Posterior cingulate gyrus (tissue), 11 donors: ENCODE measurements at regions of chr19 and their contacts with region 1.

Region 1: GRCh38 chr19:39846176-39846677 is at the start of gene FBL:
- DNase-seq: peak; percentile 92 to 99 (median 95)

Region 2: GRCh38 chr19:39539519-39540332 is 306.5 kb before region 1 on chr19 and contains the start of gene EID2:
- intact Hi-C with region 1: loop called (anchors 10 kb)
- DNase-seq: peak; percentile 93 to 99 (median 95)

Region 3: DNA sequence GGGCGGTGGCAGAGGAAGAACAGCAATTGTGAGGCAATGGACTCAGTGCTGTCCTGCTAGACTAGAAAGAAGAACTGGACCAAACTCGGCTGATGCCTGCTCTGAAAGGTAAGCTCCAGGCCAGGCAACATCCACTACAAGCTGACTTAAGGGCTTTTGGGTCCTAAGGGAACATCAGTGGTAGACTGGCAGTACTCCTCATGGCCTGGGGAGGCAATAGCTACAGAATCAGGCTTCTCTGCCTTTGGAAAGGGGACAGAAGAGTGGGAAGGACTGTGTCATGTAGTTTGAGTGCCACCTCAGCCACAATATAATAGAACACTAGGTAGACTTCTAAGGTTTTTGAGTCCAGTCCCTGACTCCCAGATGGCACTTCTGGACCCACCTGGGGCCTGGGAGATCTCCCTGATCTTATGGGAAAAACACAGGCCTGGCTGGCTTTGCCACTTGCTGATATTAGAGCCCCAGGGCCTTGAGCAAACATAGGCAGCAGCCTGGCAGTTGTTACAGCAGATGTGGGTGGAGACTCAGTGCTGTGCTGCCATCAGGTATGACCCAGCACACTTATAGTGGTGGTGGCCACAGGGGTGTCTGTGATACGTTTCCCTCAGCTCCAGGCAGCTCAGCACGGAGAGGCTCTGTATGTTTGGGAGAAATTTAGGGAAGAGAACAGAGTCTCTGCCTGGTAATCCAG is 99.2 kb before region 1 on chr19:
- intact Hi-C with region 1: no loop called
- DNase-seq: no peak

Region 4: GRCh38 chr19:39759457-39760184 is 86.6 kb before region 1 on chr19:
- intact Hi-C with region 1: no loop called
- DNase-seq: no peak

Region 5: DNA sequence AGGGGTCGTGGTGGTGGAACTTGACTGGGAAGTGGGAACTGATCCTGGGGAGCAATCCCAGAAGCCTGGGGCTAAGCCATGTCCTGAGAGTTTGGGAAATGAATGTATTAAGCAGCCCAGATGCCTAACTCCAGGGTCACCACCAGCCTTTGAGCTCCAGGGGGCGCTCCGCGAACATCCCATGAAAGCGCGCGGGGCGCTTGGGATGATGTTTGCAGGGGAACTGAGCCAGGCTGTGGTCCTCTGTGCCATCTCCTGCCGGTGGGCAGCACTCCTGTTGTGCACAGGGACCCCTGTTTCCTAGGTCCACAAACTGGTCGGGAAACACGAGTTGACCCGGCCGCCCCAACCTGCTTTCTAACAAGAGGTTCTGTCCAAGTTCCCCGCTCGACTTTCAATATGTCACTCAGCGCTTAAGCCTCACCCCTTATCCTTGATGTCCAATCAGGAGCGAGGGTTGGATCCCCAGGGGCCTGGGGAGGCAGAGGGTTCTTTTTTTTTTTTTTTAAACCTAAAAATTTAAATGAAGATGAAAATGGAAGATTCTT is 53.2 kb before region 1 on chr19:
- intact Hi-C with region 1: loop called (anchors 2 kb)
- DNase-seq: peak in 9 of 10 donors; percentile 30 to 94 (median 64)